Activated naive CD4-positive, alpha-beta T cell treated with anti-CD3 and anti-CD28 coated beads for 36 hours (primary cell): ENCODE measurements at regions of chr17 and their contacts with region 1.

Region 1: GRCh38 chr17:73371285-73371684 is 59.5 kb upstream of the CDC42EP4 start:
- DNase-seq: no peak
- H3K4me3 Mint-ChIP-seq: no peak overlapping the region
- H3K27ac Mint-ChIP-seq: no peak overlapping the region
- H3K4me1 Mint-ChIP-seq: no peaks in the 10 kb centered on the region
- H3K27me3 Mint-ChIP-seq: peaks cover 4% of the 10 kb centered on the region

Region 2: GRCh38 chr17:72985881-72986720 is 385.2 kb before region 1 on chr17:
- CTCF ChIA-PET with region 1: interaction called, 7 read pairs
- intact Hi-C with region 1: loop called (anchors 5 kb)
- DNase-seq: peak; percentile 70
- H3K4me3 Mint-ChIP-seq: no peak overlapping the region
- H3K27ac Mint-ChIP-seq: no peak overlapping the region
- H3K4me1 Mint-ChIP-seq: no peaks in the 10 kb centered on the region
- H3K27me3 Mint-ChIP-seq: no peaks in the 10 kb centered on the region

Region 3: DNA sequence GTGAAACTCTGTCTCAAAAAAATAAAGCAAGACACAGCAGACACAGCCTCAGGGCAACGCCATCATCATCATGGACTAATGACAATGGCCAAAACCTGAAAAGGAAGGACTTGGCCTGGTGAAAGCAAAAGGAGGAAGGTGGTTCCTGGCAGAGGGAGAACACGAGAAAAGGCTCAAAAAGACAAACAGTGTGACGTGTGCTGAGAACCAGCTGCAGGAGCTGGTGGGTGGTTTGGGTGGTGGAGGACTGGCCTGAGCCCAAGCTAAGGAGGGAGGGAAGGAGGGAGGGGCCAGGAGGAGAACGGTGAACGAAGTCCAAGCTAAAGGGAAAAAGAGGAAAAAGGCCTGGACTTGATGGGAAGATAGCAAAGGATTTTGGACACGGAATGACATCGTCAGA is 363.9 kb before region 1 on chr17:
- CTCF ChIA-PET with region 1: no interaction called
- intact Hi-C with region 1: no loop called
- DNase-seq: no peak
- H3K4me3 Mint-ChIP-seq: no peak overlapping the region
- H3K27ac Mint-ChIP-seq: no peak overlapping the region
- H3K4me1 Mint-ChIP-seq: peaks cover 8% of the 10 kb centered on the region
- H3K27me3 Mint-ChIP-seq: no peaks in the 10 kb centered on the region

Region 4: GRCh38 chr17:73249700-73250099 is 121.6 kb before region 1 on chr17:
- CTCF ChIA-PET with region 1: interaction called, 85 read pairs
- intact Hi-C with region 1: no loop called
- DNase-seq: no peak
- H3K4me3 Mint-ChIP-seq: no peak overlapping the region
- H3K27ac Mint-ChIP-seq: no peak overlapping the region
- H3K4me1 Mint-ChIP-seq: no peaks in the 10 kb centered on the region
- H3K27me3 Mint-ChIP-seq: no peaks in the 10 kb centered on the region

Region 5: GRCh38 chr17:73595479-73595878 is 224.2 kb after region 1 on chr17:
- CTCF ChIA-PET with region 1: no interaction called
- intact Hi-C with region 1: no loop called
- DNase-seq: peak; percentile 55
- H3K4me3 Mint-ChIP-seq: no peak overlapping the region
- H3K27ac Mint-ChIP-seq: no peak overlapping the region
- H3K4me1 Mint-ChIP-seq: peaks cover 43% of the 10 kb centered on the region
- H3K27me3 Mint-ChIP-seq: no peaks in the 10 kb centered on the region